ENCODE measurements at regions of chr4 and their contacts with region 1.

Region 1: DNA sequence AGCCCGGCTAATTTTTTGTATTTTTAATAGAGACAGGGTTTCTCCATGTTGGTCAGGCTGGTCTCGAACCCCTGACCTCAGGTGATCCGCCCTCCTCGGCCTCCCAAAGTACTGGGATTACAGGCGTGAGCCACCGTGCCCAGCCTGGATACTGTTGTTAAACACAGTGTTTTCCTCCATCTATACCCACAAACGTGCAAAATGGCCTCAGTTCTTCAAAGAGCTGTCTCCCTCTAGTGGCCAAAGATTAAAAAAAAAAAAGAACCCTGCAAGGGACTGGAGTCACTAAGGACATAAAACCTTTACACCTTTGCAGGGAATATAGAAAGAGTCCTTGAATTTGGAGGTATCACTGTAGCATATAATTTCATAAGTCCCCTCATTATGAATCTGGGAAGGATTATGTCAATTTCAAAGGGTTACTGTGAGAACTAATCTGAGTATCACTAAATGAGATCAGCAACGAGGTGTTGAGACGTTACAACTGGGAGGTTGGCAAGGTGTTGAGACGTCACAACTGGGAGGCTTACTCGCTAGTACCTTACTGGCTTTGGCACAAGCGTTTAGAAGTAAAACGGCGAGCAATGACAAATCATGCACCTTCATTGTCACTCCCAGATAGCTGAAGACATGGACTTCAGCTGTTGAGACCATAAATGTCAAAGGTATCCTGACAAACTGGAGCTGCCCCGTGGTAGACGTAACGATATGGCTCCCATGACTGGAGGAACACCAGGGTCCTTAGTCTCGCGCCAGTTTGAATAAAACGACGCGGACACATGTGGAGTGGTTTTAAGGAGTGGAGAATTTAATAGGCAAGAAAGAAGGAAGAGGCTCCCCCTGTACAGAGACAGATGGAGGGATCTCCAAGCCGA is 33.4 kb upstream of the ENPP6 start:
- DNase-seq: peak; percentile 73
- H3K4me3 Mint-ChIP-seq: no peak overlapping the region
- H3K27ac Mint-ChIP-seq: no peak overlapping the region
- H3K4me1 Mint-ChIP-seq: peaks cover 10% of the 10 kb centered on the region
- H3K27me3 Mint-ChIP-seq: no peaks in the 10 kb centered on the region
- CTCF ChIP-seq: peak; percentile 45

Region 2: GRCh38 chr4:183675625-183676024 is 575.4 kb before region 1 on chr4:
- CTCF ChIA-PET with region 1: no interaction called
- POLR2A ChIA-PET with region 1: no interaction called
- intact Hi-C with region 1: no loop called
- DNase-seq: no peak
- H3K4me3 Mint-ChIP-seq: no peak overlapping the region
- H3K27ac Mint-ChIP-seq: no peak overlapping the region
- H3K4me1 Mint-ChIP-seq: no peaks in the 10 kb centered on the region
- H3K27me3 Mint-ChIP-seq: no peaks in the 10 kb centered on the region
- CTCF ChIP-seq: no peak

Region 3: DNA sequence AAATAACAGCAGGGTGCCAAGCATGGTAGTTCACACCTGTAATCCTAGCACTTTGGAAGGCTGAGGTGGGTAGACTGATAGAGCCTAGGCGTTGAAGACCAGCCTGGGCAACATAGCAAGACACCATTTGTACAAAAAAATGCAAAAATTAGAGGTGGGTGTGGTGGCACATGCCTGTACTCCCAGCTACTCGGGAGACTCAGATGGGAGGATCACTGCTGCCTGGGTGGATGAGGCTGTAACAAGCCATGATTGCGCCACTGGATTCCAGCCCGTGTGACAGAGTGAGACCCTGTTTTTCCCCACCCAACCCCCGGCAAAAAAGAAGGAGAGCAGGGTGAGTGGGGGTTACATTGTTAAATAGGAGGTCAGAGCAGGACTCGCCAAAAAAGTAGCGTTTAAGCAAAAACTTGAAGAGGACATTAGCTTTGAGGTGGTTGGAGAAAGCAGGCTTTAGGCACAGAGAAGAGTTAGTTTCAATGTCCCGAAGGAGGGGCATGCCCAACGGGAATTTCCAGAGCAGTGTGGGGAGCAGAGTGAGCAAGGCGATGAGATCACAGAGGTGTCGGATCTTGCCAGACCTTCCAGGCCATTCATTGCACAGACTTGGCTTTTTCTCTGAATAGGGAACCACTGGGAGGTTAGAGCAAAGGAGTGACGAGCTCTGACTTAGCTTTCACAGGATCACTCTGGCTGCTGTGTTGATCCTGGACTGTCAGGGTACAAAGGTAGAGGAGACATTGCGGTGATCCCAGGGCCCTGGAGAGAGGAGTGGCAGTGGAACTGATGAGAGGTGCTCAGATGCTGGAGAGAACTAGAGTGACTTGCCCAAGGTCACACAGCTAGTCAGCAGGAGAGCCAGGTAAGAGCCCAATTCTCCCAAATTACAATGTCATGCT is 521.4 kb before region 1 on chr4:
- CTCF ChIA-PET with region 1: no interaction called
- POLR2A ChIA-PET with region 1: no interaction called
- intact Hi-C with region 1: no loop called
- DNase-seq: peak; percentile 67
- H3K4me3 Mint-ChIP-seq: peak overlapping the region; percentile 56
- H3K27ac Mint-ChIP-seq: peak overlapping the region; percentile 78
- H3K4me1 Mint-ChIP-seq: peaks cover 10% of the 10 kb centered on the region
- H3K27me3 Mint-ChIP-seq: no peaks in the 10 kb centered on the region
- CTCF ChIP-seq: no peak

Region 4: GRCh38 chr4:183840311-183840710 is 410.7 kb before region 1 on chr4:
- CTCF ChIA-PET with region 1: interaction called, 9 read pairs
- POLR2A ChIA-PET with region 1: no interaction called
- intact Hi-C with region 1: loop called (anchors 1 kb)
- DNase-seq: peak; percentile 81
- H3K4me3 Mint-ChIP-seq: no peak overlapping the region
- H3K27ac Mint-ChIP-seq: no peak overlapping the region
- H3K4me1 Mint-ChIP-seq: no peaks in the 10 kb centered on the region
- H3K27me3 Mint-ChIP-seq: no peaks in the 10 kb centered on the region
- CTCF ChIP-seq: peak; percentile 79

Region 5: DNA sequence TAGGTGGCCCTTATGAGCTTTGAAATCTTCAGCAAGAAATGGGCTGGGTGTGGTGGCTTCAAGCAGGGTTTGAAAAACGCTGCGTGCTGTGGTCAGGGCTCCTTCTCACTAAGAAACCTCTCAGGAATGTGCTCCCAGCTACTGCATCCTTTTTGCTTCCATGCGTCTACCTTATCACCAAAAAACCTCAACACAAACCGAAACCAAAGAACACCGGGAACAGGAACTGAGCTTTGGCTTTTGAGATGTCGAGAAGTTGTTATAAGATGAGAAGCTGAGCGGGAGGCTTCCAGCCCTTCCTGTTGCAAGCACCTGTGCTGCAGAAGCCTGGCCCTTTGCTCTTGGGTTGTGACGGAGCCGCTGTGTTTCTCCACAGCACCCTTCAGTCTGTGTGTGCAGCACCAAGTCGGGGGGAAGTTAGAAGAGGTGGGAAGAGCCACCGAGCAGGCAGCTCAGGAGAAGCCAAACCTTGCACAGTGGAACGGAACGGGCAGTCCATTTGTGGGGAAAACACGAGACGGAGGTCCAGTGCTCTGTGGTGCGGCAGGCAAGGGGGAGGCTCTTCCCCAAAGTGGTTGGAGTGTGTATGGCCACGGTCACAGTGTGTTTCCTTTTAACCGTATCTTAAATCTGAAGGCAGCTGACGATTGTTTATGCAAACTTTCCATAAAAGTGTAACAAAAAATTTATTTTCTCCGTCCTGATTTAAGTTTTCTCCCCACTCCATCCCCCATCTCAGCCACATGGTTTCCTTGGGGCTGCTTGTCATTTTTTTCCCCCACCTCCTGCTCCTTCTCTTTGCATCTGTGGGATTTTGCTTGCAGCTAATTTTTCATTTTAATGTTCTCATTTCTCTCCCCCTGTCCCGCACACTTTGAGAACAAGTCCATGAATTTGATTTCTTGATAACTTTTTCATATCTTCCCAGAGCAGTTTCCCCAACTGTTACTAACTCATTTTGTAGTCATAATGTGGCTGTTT is 222.3 kb before region 1 on chr4:
- CTCF ChIA-PET with region 1: no interaction called
- POLR2A ChIA-PET with region 1: no interaction called
- intact Hi-C with region 1: no loop called
- DNase-seq: no peak
- H3K4me3 Mint-ChIP-seq: no peak overlapping the region
- H3K27ac Mint-ChIP-seq: no peak overlapping the region
- H3K4me1 Mint-ChIP-seq: no peaks in the 10 kb centered on the region
- H3K27me3 Mint-ChIP-seq: no peaks in the 10 kb centered on the region
- CTCF ChIP-seq: no peak

Region 6: GRCh38 chr4:184168406-184169019 is 82.5 kb before region 1 on chr4:
- CTCF ChIA-PET with region 1: interaction called, 11 read pairs
- POLR2A ChIA-PET with region 1: no interaction called
- intact Hi-C with region 1: loop called (anchors 2 kb)
- DNase-seq: peak; percentile 61
- H3K4me3 Mint-ChIP-seq: no peak overlapping the region
- H3K27ac Mint-ChIP-seq: no peak overlapping the region
- H3K4me1 Mint-ChIP-seq: no peaks in the 10 kb centered on the region
- H3K27me3 Mint-ChIP-seq: no peaks in the 10 kb centered on the region
- CTCF ChIP-seq: peak; percentile 95

Region 7: DNA sequence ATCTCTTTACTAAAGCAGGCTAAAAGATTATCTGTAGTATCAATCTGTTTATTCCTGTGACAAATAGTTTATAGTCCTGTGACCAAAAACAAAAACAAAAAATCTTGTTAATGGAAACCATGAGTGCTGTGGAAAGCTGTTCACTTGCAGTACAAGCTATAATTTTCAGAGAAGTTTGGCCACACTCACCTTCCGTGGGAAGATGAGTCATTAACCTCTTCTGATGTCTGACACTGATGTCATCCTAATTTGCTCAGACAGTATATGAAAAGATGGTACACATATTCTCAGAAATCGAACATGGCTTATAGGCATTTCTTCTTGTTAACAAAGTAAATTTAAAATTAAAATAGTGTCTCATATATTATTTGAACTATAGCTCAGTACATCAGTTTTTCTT is 13.4 kb before region 1 on chr4:
- CTCF ChIA-PET with region 1: interaction called, 12 read pairs
- POLR2A ChIA-PET with region 1: interaction called, 4 read pairs
- intact Hi-C with region 1: no loop called
- DNase-seq: peak; percentile 15
- H3K4me3 Mint-ChIP-seq: no peak overlapping the region
- H3K27ac Mint-ChIP-seq: no peak overlapping the region
- H3K4me1 Mint-ChIP-seq: no peaks in the 10 kb centered on the region
- H3K27me3 Mint-ChIP-seq: no peaks in the 10 kb centered on the region
- CTCF ChIP-seq: no peak